ENCODE measurements at regions of chr20 and their contacts with region 1.

Region 1: GRCh38 chr20:44885392-44886265 is at the start of gene YWHAB:
- DNase-seq: peak; percentile 98
- H3K4me3 ChIP-seq: peak within 1 kb of the TSS; percentile 72 to 98 (median 94)
- H3K27ac ChIP-seq: peak within 1 kb of the TSS; percentile 81
- H3K4me1 ChIP-seq: peaks cover 19% of the 10 kb centered on the region
- H3K27me3 ChIP-seq: no peaks in the 10 kb centered on the region
- CTCF ChIP-seq: peak in 1 of 2 donors; percentile 7
- total RNA-seq, gene YWHAB: 100 to 238 TPM

Region 2: DNA sequence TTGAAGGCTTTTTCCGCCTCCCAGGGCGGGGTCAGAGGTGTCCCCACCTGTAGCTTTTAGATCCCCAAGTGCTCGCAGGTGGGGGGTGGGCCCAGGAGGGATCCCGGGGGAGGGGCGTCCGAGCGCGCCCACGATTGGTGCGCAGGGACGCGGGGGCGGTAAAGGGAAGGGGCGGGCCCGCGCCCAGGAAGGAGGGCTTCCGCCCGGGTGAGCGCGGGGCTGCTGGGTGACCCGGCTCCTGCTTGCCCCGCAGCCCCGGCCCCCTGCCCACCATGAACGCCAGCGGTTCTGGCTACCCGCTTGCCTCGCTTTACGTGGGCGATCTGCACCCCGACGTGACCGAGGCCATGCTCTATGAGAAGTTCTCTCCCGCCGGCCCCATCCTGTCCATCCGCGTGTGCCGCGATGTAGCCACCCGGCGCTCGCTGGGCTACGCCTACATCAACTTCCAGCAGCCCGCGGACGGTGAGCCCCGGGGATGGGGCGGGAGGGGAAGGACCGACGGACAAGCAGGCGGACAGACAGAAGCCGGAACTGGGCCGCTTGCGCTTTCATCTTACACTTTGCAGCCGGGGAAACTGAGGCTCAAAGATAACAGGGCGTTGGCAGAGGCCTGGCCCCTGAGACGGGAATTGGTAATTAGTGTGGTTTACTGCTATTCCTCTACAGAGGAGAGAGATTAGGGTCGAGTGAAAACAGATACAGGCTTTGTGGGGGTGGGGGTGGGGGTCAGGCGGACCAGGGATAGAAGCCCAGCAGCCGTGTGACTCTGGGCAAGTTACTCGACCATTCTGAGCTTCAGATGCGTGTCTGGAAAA is 24.5 kb after region 1 on chr20 and contains the start of gene PABPC1L:
- CTCF ChIA-PET with region 1: no interaction called
- dilution Hi-C with region 1: no loop called
- in situ Hi-C with region 1: no loop called
- intact Hi-C with region 1: loop called (anchors 1 kb)
- DNase-seq: peak; percentile 77
- H3K4me3 ChIP-seq: peak within 1 kb of the TSS; percentile 54 to 86 (median 64)
- H3K27ac ChIP-seq: peak within 1 kb of the TSS; percentile 14
- H3K4me1 ChIP-seq: peaks cover 8% of the 10 kb centered on the region
- H3K27me3 ChIP-seq: no peaks in the 10 kb centered on the region
- CTCF ChIP-seq: no peak
- total RNA-seq, gene PABPC1L: 9.7 to 62.7 TPM

Region 3: GRCh38 chr20:44966030-44966961 is 80.7 kb after region 1 on chr20 and contains the start of gene STK4:
- CTCF ChIA-PET with region 1: no interaction called
- dilution Hi-C with region 1: no loop called
- in situ Hi-C with region 1: no loop called
- intact Hi-C with region 1: loop called (anchors 5 kb)
- DNase-seq: peak; percentile 92
- H3K4me3 ChIP-seq: peak within 1 kb of the TSS; percentile 80 to 92 (median 90)
- H3K27ac ChIP-seq: peak within 1 kb of the TSS; percentile 66
- H3K4me1 ChIP-seq: peaks cover 18% of the 10 kb centered on the region
- H3K27me3 ChIP-seq: no peaks in the 10 kb centered on the region
- CTCF ChIP-seq: peak; percentile 15 to 58
- total RNA-seq, gene STK4: 30.7 to 42.7 TPM

Measured in mammary epithelial cell (primary cell).